ENCODE measurements at regions of chr10 and their contacts with region 1.

Region 1: GRCh38 chr10:8138471-8138870 is 84.0 kb downstream of the GATA3 start:
- DNase-seq: no peak
- ATAC-seq: no peak
- H3K4me3 ChIP-seq: no peak overlapping the region
- H3K4me3 Mint-ChIP-seq: no peak overlapping the region
- H3K27ac ChIP-seq: no peak overlapping the region
- H3K27ac Mint-ChIP-seq: no peak overlapping the region
- H3K4me1 ChIP-seq: no peaks in the 10 kb centered on the region
- H3K4me1 Mint-ChIP-seq: peaks cover 1% of the 10 kb centered on the region
- H3K27me3 ChIP-seq: no peaks in the 10 kb centered on the region
- H3K27me3 Mint-ChIP-seq: peaks cover 24% of the 10 kb centered on the region
- CTCF ChIP-seq: no peak

Region 2: DNA sequence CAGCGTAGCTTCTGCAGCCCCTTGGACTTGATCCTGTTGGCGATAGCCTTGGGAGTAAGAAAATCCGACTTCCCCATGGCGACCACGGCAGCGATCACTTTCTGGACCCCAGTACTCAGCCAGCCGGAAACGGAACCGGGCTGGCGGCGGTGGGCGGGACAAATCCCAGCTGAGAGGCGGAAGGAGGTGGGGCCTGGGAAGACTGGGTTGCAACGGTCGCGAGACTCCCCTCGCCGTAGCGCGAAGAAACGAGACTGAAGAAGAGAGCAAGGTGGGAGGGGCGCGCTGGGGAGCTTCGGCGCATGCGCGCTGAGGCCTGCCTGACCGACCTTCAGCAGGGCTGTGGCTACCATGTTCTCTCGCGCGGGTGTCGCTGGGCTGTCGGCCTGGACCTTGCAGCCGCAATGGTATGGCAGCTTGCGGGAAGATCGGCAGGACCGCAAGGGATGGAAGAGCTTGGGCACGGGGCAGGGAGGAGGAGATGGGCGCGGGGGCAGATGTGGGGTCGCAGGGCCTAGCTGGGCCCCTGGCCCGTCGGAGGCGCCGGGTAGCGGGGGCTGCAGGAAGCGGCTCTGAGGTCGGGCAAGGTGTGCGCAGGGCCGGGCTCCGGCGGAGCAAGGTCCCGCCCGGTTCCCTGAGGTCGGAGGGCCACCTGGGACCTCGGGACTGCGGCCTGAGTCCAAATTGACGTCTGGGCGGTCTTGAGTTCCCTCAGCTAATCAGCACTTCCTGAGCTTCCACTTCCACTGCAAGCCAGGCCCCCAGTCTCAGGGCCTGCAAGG is 350.4 kb before region 1 on chr10 and contains the starts of genes ATP5F1C and KIN:
- CTCF ChIA-PET with region 1: no interaction called
- POLR2A ChIA-PET with region 1: no interaction called
- intact Hi-C with region 1: no loop called
- DNase-seq: peak; percentile 98
- ATAC-seq: peak; percentile 98
- H3K4me3 ChIP-seq: peak within 1 kb of the TSS; percentile 87 to 95 (median 87)
- H3K4me3 Mint-ChIP-seq: no peak within 1 kb of the TSS
- H3K27ac ChIP-seq: peak within 1 kb of the TSS; percentile 50 to 75
- H3K27ac Mint-ChIP-seq: peak within 1 kb of the TSS; percentile 47
- H3K4me1 ChIP-seq: peaks cover 26 to 28% of the 10 kb centered on the region in 2 donors
- H3K4me1 Mint-ChIP-seq: peaks cover 51% of the 10 kb centered on the region
- H3K27me3 ChIP-seq: no peaks in the 10 kb centered on the region
- H3K27me3 Mint-ChIP-seq: no peaks in the 10 kb centered on the region
- CTCF ChIP-seq: no peak
- total RNA-seq, gene ATP5F1C: 110 and 114 TPM in 2 replicates
- total RNA-seq, gene KIN: 16.5 and 17.3 TPM in 2 replicates

Region 3: GRCh38 chr10:7969623-7970022 is 168.8 kb before region 1 on chr10:
- CTCF ChIA-PET with region 1: no interaction called
- POLR2A ChIA-PET with region 1: no interaction called
- intact Hi-C with region 1: no loop called
- DNase-seq: no peak
- ATAC-seq: no peak
- H3K4me3 ChIP-seq: no peak overlapping the region
- H3K4me3 Mint-ChIP-seq: no peak overlapping the region
- H3K27ac ChIP-seq: no peak overlapping the region
- H3K27ac Mint-ChIP-seq: no peak overlapping the region
- H3K4me1 ChIP-seq: no peaks in the 10 kb centered on the region
- H3K4me1 Mint-ChIP-seq: peaks cover 4% of the 10 kb centered on the region
- H3K27me3 ChIP-seq: no peaks in the 10 kb centered on the region
- H3K27me3 Mint-ChIP-seq: no peaks in the 10 kb centered on the region
- CTCF ChIP-seq: no peak

Region 4: DNA sequence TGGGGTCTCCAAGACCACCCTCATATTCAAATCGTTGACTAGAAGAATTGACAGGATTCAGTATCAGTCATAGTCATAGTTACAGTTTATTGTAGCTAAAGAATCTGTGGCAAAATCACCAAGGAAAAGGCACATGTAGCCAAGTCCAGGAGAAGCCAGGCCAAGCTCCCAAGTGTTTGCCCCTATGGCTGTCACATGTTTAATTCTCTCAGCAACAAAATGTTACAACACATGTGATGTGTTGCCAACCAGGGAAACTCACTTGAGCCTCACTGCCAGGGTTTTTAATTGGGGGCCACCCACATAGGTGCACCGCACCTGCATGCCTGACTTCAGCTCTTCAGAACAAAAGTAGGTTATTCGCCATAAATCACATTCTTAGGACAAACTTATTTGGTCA is 1848.3 kb after region 1 on chr10:
- CTCF ChIA-PET with region 1: no interaction called
- POLR2A ChIA-PET with region 1: interaction called, 11 read pairs
- intact Hi-C with region 1: no loop called
- DNase-seq: no peak
- ATAC-seq: no peak
- H3K4me3 ChIP-seq: no peak overlapping the region
- H3K4me3 Mint-ChIP-seq: no peak overlapping the region
- H3K27ac ChIP-seq: no peak overlapping the region
- H3K27ac Mint-ChIP-seq: no peak overlapping the region
- H3K4me1 ChIP-seq: no peaks in the 10 kb centered on the region
- H3K4me1 Mint-ChIP-seq: no peaks in the 10 kb centered on the region
- H3K27me3 ChIP-seq: no peaks in the 10 kb centered on the region
- H3K27me3 Mint-ChIP-seq: no peaks in the 10 kb centered on the region
- CTCF ChIP-seq: no peak

Measured in B cell (primary cell).